ENCODE measurements at regions of chr15 and their contacts with region 1.

Region 1: GRCh38 chr15:96947296-96948229 is 617.1 kb downstream of the NR2F2 start:
- DNase-seq: peak; percentile 22
- H3K4me3 ChIP-seq: peak overlapping the region; percentile 26 to 48 (median 41)
- H3K27ac ChIP-seq: no peak overlapping the region
- H3K4me1 ChIP-seq: peaks cover 12% of the 10 kb centered on the region
- H3K27me3 ChIP-seq: peaks cover 3% of the 10 kb centered on the region in 2 experiments
- CTCF ChIP-seq: no peak
- POLR2A ChIP-seq: no peak

Region 2: GRCh38 chr15:97026436-97027115 is 79.0 kb after region 1 on chr15:
- CTCF ChIA-PET with region 1: no interaction called
- POLR2A ChIA-PET with region 1: interaction called, 10 read pairs
- dilution Hi-C with region 1: no loop called
- intact Hi-C with region 1: no loop called
- DNase-seq: no peak
- H3K4me3 ChIP-seq: no peak overlapping the region
- H3K27ac ChIP-seq: no peak overlapping the region
- H3K4me1 ChIP-seq: no peaks in the 10 kb centered on the region
- H3K27me3 ChIP-seq: no peaks in the 10 kb centered on the region
- CTCF ChIP-seq: no peak
- POLR2A ChIP-seq: no peak